ENCODE measurements at regions of chr16 and their contacts with region 1.

Region 1: DNA sequence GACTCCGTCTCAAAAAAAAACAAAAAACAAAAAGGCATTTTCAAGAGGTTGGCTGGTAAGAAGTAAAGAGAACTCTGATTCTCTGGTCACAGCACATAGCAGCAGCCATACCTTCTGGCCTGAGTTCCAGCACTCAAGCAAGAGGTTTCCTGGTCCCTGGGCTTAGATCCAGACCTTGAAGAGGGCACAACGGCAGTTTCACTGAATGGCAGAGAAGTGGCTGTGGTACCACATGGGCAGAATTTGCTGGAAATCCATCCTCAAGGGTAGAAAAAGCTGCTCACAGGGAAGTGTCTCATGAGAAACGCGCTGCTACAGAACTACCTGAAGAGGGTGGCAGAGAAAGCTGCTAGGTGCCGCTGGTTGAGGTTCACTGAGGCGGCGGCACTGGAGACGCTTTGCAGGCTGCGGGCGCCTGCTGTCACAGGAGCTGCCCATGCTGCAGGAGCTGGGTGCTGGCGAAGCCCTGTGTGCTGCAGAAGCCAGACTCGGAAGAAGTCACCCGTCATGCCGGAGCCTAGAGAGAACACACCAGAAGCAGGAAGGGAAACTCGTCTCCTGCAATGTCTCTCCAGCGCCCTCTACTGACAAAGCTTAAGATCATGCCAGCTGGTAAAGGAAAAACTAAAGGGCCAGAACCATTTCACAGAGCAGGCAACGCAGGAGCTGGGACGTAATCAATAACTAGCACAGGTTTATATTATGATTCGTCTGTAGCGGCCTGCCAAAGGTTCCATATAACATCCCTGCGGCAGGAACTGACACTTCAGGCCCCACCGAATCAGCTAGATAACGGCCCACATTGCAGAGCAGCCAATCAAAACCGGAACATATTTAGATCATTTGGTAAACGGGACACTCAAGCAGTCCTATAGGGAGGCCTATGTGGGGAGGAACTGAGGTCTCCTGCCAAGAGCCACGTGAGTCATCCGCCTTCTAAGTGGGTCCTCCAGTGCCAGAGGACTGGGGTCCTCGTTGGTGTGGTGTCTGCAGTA is 5.4 kb upstream of the ZNF213 start:
- DNase-seq: peak; percentile 91
- H3K4me3 ChIP-seq: peak overlapping the region; percentile 65
- H3K27ac ChIP-seq: peak overlapping the region; percentile 57
- H3K4me1 ChIP-seq: peaks cover 20% of the 10 kb centered on the region
- CTCF ChIP-seq: peak; percentile 97

Region 2: GRCh38 chr16:3094289-3095027 is 35.0 kb before region 1 on chr16:
- CTCF ChIA-PET with region 1: interaction called, 3 read pairs
- POLR2A ChIA-PET with region 1: interaction called, 3 read pairs
- intact Hi-C with region 1: loop called (anchors 1 kb)
- DNase-seq: peak; percentile 62
- H3K4me3 ChIP-seq: no peak overlapping the region
- H3K27ac ChIP-seq: no peak overlapping the region
- H3K4me1 ChIP-seq: peaks cover 26% of the 10 kb centered on the region
- CTCF ChIP-seq: peak; percentile 89

Region 3: GRCh38 chr16:3099732-3100499 is 29.5 kb before region 1 on chr16:
- CTCF ChIA-PET with region 1: interaction called, 5 read pairs
- POLR2A ChIA-PET with region 1: interaction called, 3 read pairs
- intact Hi-C with region 1: loop called (anchors 1 kb)
- DNase-seq: peak; percentile 94
- H3K4me3 ChIP-seq: peak overlapping the region; percentile 56
- H3K27ac ChIP-seq: no peak overlapping the region
- H3K4me1 ChIP-seq: peaks cover 47% of the 10 kb centered on the region
- CTCF ChIP-seq: no peak